ENCODE measurements at regions of chr9 and their contacts with region 1.

Region 1: DNA sequence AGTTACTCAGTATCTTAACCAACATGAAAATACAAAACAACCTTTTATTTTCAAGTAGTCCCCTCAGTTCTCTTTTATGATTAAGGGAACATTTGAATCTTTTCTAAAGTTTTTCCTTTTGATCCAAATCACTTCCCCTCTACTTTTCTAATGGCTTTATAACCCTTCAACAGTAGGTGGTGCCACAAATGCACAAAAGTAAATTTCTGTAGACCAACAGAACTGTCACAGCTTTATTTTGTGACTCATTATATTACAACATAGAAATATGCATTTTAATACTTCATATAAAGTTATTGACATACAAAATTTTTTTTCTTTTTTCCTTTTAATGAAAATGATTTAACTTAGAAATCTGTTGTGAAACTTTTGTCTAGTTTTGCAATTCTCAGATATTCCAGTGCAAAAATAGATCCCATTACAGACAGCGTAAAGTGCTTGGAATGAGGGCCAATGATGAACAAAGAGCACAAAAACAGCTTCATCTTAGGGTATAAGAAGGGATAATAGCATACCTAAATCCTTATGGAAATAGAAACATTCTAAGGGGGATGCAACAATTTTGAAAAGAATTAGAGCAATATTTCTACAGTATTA is 17.0 kb downstream of the NIPSNAP3B start:
- DNase-seq: peak; percentile 54
- H3K4me3 ChIP-seq: no peak overlapping the region
- H3K27ac ChIP-seq: no peak overlapping the region
- H3K4me1 ChIP-seq: peaks cover 24% of the 10 kb centered on the region
- CTCF ChIP-seq: peak; percentile 90

Region 2: GRCh38 chr9:104564358-104564757 is 216.5 kb before region 1 on chr9:
- CTCF ChIA-PET with region 1: no interaction called
- POLR2A ChIA-PET with region 1: no interaction called
- intact Hi-C with region 1: no loop called
- DNase-seq: no peak
- H3K4me3 ChIP-seq: no peak overlapping the region
- H3K27ac ChIP-seq: no peak overlapping the region
- H3K4me1 ChIP-seq: no peaks in the 10 kb centered on the region
- CTCF ChIP-seq: no peak

Region 3: DNA sequence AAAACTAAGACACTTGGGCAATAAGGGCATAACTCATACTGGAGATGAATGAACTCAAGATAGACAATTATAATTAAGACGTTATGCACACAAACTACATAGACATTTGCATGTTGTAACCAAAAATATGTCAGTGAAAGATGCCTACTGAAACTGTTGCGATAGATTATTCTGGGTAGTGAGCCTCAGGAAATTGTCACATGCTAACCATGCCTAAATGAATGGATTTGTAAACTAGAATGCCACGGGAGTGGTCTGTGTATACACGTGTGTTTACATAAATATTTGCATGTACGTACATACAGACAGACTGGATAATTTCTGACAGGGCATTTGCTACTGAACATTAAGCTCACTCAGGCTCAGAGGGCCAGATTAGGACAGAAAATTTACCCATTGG is 15.8 kb before region 1 on chr9:
- CTCF ChIA-PET with region 1: no interaction called
- POLR2A ChIA-PET with region 1: interaction called, 12 read pairs
- intact Hi-C with region 1: no loop called
- DNase-seq: no peak
- H3K4me3 ChIP-seq: peak overlapping the region; percentile 20
- H3K27ac ChIP-seq: no peak overlapping the region
- H3K4me1 ChIP-seq: peaks cover 29% of the 10 kb centered on the region
- CTCF ChIP-seq: no peak

Region 4: GRCh38 chr9:104863180-104863883 is 82.4 kb after region 1 on chr9:
- CTCF ChIA-PET with region 1: no interaction called
- POLR2A ChIA-PET with region 1: no interaction called
- intact Hi-C with region 1: loop called (anchors 5 kb)
- DNase-seq: peak; percentile 84
- H3K4me3 ChIP-seq: no peak overlapping the region
- H3K27ac ChIP-seq: peak overlapping the region; percentile 18
- H3K4me1 ChIP-seq: peaks cover 29% of the 10 kb centered on the region
- CTCF ChIP-seq: peak; percentile 99

Region 5: DNA sequence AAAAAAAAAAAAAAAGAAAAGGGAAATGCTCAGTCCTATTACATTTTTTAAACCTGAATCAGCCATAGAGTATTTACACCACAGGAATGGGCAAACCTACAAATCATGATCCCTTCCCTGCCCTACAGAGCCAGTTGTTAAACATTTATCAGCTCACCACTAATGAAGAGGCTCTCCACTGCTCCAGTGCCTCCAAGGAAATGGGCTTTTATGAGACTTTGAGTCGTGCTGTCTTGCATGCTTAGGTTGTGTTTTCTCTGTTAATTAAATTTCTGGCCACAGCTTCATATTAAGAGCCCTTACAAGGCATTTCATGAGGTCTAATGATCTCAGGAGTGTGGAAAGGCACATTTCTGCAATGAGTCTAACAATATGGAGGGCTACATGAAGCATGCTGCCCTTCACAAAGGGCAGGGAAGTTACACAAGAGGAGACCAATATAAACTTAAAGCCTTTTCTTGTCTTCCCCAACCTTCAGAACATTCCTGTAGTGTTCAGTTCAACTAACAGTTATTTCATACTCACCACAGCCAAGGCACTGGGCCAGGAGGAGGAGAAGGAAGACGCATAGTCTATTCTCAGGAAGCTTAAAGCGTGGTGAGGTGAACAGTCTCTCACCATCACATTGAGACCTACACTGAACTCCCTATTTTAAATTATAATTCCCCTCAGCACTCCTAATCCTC is 287.1 kb after region 1 on chr9:
- CTCF ChIA-PET with region 1: no interaction called
- POLR2A ChIA-PET with region 1: no interaction called
- intact Hi-C with region 1: no loop called
- DNase-seq: no peak
- H3K4me3 ChIP-seq: no peak overlapping the region
- H3K27ac ChIP-seq: no peak overlapping the region
- H3K4me1 ChIP-seq: peaks cover 15% of the 10 kb centered on the region
- CTCF ChIP-seq: no peak

Region 6: GRCh38 chr9:105414947-105415661 is 634.2 kb after region 1 on chr9:
- CTCF ChIA-PET with region 1: no interaction called
- POLR2A ChIA-PET with region 1: interaction called, 3 read pairs
- intact Hi-C with region 1: loop called (anchors 5 kb)
- DNase-seq: peak; percentile 78
- H3K4me3 ChIP-seq: no peak overlapping the region
- H3K27ac ChIP-seq: no peak overlapping the region
- H3K4me1 ChIP-seq: peaks cover 4% of the 10 kb centered on the region
- CTCF ChIP-seq: peak; percentile 99